ENCODE measurements at regions of chr17 and their contacts with region 1.

Region 1: DNA sequence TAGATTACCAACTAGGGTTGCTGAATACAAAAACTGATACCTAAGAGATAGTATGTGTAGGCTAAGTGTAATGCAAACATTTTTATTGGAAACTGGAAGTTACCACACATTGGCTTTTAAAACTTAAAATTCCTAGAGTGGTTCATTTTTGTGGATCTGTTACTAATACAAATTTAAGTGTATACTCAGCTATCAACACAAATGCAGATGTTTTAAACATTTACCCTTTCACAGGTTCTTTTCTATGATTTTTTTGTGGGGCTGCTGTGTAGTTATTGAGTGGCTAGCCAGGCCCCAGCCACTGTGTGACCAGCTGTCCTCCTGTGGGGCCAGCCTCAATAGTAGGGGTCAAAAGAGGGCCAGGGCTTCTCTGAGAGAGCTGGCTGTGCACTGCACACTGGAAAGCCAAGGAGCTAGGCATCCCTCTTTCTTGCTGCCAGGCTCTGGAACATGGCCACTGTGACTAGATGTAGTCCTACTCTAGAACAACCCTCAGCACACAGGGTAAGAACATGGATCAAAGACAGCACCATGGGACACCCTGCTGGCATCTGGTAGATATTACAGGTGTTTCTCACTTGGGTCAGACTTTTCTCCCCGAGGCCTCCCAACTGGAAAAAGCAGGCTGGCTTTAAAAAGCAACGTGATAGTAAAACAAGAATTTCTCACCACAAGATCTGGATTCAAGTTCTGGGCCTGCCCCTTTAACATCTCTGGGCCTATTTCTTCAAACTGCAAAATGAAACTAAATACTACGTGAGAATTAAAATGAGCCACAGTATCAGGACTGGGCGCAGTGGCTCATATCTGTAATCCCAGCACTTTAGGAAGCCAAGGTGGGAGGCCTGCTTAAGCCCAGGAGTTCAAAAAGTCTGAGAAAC is 7.3 kb upstream of the VEZF1 start:
- DNase-seq: peak; percentile 64
- ATAC-seq: peak; percentile 73
- H3K4me3 Mint-ChIP-seq: no peak overlapping the region
- H3K27ac Mint-ChIP-seq: no peak overlapping the region
- H3K4me1 Mint-ChIP-seq: peaks cover 60% of the 10 kb centered on the region
- H3K27me3 Mint-ChIP-seq: no peaks in the 10 kb centered on the region

Region 2: DNA sequence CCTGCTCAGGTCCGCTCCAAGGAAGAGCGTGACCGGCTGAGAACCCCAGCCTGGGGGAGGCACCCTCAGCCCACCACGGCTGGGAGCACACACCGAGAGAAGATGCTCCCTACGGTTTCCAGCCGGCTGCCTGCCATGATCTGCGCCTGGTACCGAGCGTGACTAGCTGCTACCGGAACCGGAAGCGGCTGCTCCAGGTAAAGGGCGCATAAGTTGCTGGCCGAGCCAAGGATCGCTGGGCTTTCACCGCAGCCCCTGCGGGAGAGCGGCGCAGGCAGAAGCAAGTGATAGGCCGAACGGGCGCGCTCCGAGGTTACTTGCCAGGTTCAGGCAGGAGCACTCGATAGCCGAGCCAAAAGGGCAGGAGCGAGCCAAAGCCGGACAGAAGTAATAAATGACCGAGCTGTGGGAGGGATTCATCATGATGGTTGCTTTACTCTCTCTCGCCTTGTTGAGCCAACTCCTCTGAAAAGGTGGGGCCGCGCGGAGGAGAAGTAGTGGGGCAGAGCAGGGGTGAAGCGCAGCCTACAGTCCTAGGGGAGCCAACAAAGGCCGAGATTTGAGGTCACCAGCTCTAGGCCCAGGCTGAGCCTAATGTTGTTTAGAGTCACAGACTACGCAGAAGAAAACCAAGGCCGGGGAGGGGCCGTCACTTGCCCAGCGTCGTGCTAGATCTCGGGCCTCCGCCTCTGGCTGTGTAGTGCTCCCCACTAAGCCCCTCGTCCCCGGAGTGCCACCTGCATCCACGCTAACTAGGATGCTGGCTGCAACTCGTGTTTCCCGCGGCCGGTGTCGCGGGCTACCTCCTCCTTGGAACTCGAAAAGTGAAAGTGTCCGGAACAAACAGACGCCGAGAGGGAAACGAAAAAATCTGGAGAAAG is 145.2 kb before region 1 on chr17 and contains the start of gene MRPS23:
- CTCF ChIA-PET with region 1: interaction called, 84 read pairs
- POLR2A ChIA-PET with region 1: interaction called, 7 read pairs
- DNase-seq: peak; percentile 98
- ATAC-seq: peak; percentile 93
- H3K4me3 Mint-ChIP-seq: peak within 1 kb of the TSS; percentile 97
- H3K27ac Mint-ChIP-seq: peak within 1 kb of the TSS; percentile 99
- H3K4me1 Mint-ChIP-seq: peaks cover 40% of the 10 kb centered on the region
- H3K27me3 Mint-ChIP-seq: no peaks in the 10 kb centered on the region
- total RNA-seq, gene MRPS23: 46.3 to 48.7 TPM

Region 3: DNA sequence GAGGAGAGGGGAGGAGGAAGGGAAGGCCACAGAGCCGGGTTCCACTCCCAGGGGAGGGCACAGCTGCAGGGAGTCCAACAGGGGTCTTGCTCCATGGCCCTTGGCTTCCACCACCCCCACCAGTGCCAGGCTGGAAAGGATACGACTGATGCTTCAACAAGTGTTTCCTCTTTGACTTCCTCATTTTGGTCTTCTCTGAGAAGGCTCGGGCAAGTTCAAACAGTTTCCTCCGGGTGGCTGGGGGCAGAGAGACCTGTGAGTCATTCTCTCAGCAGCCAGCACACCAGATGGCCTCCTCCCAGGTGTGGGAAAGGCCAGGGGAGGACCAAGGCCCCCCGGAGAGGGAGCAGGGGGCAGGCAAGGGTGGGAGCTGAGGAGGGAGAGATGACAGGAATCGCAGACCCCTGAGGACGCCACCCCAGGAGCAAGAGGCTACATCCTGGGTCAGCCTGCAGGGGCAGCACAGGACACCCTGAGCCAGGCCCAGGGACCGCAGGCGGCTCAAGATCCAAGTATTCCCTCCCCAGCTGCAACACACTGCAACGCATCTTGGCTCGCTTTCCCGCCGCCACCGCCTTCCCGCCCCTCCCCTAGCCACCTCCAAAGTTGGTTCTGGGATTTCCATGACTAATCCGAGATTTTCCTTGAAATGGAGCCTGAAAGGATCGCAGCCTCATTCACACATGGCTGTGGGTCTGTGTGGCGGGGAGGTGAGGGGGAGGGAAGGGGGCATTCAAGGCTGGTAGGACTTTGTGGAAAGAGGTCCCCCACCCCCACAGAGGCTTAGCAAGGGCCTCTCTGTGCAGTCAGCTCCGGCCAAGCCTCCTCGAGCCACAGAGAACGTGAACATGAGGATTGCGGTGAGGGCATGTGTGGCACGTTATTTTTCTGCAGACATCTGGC is 127.1 kb before region 1 on chr17:
- CTCF ChIA-PET with region 1: interaction called, 138 read pairs
- POLR2A ChIA-PET with region 1: no interaction called
- DNase-seq: peak; percentile 72
- ATAC-seq: peak; percentile 88
- H3K4me3 Mint-ChIP-seq: no peak overlapping the region
- H3K27ac Mint-ChIP-seq: peak overlapping the region; percentile 85
- H3K4me1 Mint-ChIP-seq: peaks cover 27% of the 10 kb centered on the region
- H3K27me3 Mint-ChIP-seq: peaks cover 24% of the 10 kb centered on the region

Region 4: DNA sequence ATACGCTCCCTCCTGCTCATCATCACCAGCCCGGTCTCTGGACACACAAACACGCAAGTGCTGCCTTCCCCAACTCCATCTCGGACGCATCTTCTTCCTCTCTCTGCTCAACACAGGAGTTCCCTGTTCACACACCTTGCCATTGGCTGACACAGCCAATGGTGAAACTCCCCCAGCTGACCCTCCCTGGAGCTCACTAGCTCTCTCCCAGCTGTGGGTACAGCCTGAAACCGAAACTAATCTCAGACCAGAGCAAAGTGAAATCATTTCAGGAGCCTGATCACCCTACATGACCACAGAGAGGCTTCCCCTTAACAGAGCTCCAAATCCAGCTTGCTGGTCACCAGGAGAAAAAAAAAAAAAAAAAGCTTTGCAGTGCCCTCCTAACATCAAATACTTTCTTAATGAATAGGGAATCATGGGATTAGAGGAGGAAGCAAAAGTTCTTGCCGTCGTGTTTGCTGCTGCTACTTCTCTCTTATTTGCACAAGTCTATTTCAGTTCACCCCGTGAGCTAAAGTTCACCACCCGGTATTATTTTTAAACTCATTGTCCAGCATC is 48.4 kb before region 1 on chr17:
- CTCF ChIA-PET with region 1: interaction called, 20 read pairs
- POLR2A ChIA-PET with region 1: interaction called, 3 read pairs
- DNase-seq: peak; percentile 60
- ATAC-seq: peak; percentile 91
- H3K4me3 Mint-ChIP-seq: peak overlapping the region; percentile 52
- H3K27ac Mint-ChIP-seq: no peak overlapping the region
- H3K4me1 Mint-ChIP-seq: peaks cover 40% of the 10 kb centered on the region
- H3K27me3 Mint-ChIP-seq: peaks cover 47% of the 10 kb centered on the region

Region 5: GRCh38 chr17:57976594-57976993 is 18.7 kb before region 1 on chr17:
- CTCF ChIA-PET with region 1: interaction called, 37 read pairs
- POLR2A ChIA-PET with region 1: interaction called, 3 read pairs
- DNase-seq: no peak
- ATAC-seq: no peak
- H3K4me3 Mint-ChIP-seq: no peak overlapping the region
- H3K27ac Mint-ChIP-seq: no peak overlapping the region
- H3K4me1 Mint-ChIP-seq: peaks cover 3% of the 10 kb centered on the region
- H3K27me3 Mint-ChIP-seq: no peaks in the 10 kb centered on the region

Region 6: GRCh38 chr17:58006924-58007780 is 11.8 kb after region 1 on chr17 and contains the start of gene SRSF1:
- CTCF ChIA-PET with region 1: interaction called, 71 read pairs
- POLR2A ChIA-PET with region 1: interaction called, 29 read pairs
- DNase-seq: peak; percentile 98
- ATAC-seq: peak; percentile 90
- H3K4me3 Mint-ChIP-seq: peak within 1 kb of the TSS; percentile 99
- H3K27ac Mint-ChIP-seq: peak within 1 kb of the TSS; percentile 99
- H3K4me1 Mint-ChIP-seq: peaks cover 52% of the 10 kb centered on the region
- H3K27me3 Mint-ChIP-seq: no peaks in the 10 kb centered on the region
- total RNA-seq, gene SRSF1: 382 to 383 TPM

Measured in activated CD8-positive, alpha-beta T cell treated with anti-CD3 and anti-CD28 coated beads, Interleukin-2, amount 10 ng/mL, durations not matched to agents 7 days and 5 days (primary cell).